WTC11 (cell line): ENCODE measurements at regions of chr12 and their contacts with region 1.

Region 1: DNA sequence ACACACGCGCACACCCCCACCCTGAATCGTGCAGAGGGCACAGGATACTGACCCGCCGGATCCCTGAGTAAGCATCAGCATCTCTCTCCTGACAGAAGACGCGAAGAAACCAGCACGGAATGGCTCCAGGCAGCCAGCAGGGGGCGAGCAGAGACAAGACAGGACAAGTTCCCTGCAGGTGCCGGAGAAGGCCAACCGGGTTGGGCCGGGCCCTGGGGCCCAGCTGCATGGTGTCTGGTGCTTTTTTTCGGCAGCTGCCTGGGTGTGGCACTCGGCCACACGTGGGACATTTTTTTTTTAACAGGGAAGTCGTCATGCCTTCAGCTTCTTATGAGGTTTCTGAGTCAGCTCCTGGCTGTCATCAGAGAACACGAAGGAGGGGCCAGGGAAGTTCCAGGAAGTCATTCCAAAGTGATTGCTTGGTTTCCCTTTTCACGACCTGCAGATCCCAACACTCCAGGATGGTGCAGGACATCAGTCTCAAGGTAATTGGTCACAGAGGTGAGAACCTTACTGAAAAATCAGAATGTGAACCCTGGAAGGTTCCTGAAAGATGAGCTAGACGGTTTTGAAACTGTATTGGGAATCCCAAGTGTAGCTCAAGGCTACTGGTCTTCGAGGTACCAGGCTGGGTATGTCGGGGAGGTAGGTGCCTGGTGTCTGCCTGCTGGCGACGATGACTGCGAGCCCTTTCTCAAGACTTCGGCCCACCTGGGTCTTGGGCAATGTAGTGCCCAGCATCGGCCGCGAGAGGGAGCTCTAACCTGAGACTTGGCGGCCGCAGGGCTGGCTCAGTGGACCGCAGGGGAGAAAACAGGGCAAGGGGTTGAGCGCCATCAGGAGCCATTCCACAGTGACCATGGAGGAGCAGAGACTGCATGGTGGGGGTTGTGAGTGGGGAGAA is 190.8 kb upstream of the PRMT8 start:
- DNase-seq: peak; percentile 94
- ATAC-seq: peak; percentile 71
- H3K4me3 Mint-ChIP-seq: peak overlapping the region; percentile 50
- H3K27ac Mint-ChIP-seq: no peak overlapping the region; the same call in 1 of the 2 replicates
- H3K4me1 Mint-ChIP-seq: peaks cover 12% of the 10 kb centered on the region
- H3K27me3 Mint-ChIP-seq: no peaks in the 10 kb centered on the region; the same call in 1 of the 2 replicates
- CTCF ChIP-seq: peak; percentile 95

Region 2: DNA sequence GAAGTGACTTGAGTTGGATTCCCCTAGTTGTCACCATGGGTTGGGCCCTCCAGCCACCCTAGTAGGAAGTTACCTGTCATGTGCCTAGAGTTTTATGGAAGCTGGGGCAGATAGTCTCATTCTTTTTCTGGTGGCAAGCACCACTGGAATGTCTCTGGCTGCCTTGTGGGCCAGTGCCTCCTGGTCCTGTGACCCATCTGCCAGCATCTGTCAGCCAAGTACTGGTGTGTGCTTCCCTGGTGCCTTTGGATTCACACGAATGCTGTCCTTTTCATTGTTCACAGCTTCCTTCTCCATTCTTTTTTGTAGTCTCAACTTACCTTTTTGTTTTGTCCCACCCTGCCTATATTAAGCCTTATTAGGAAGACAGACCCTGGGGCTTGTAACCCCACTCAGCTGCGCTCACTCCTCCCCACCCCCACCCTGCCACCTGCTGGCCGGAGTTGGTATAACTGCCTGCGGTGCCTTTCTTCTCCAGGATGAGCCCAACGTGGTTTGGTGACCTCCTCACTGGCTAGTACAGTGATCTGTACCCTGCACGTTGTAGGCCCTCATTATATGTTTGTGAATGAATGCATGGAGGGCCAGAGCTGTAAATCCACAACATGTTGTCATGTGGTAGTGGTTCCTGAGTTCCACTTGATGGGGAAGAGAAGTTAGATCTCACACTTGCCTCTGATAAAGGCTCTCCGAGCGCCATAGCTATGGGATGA is 97.3 kb before region 1 on chr12:
- CTCF ChIA-PET with region 1: interaction called, 27 read pairs
- POLR2A ChIA-PET with region 1: no interaction called
- DNase-seq: peak; percentile 83
- ATAC-seq: peak; percentile 6; the same call in 1 of the 2 replicates
- H3K4me3 Mint-ChIP-seq: no peak overlapping the region
- H3K27ac Mint-ChIP-seq: no peak overlapping the region
- H3K4me1 Mint-ChIP-seq: peaks cover 40% of the 10 kb centered on the region
- H3K27me3 Mint-ChIP-seq: peaks cover 36% of the 10 kb centered on the region
- CTCF ChIP-seq: peak; percentile 92

Region 3: DNA sequence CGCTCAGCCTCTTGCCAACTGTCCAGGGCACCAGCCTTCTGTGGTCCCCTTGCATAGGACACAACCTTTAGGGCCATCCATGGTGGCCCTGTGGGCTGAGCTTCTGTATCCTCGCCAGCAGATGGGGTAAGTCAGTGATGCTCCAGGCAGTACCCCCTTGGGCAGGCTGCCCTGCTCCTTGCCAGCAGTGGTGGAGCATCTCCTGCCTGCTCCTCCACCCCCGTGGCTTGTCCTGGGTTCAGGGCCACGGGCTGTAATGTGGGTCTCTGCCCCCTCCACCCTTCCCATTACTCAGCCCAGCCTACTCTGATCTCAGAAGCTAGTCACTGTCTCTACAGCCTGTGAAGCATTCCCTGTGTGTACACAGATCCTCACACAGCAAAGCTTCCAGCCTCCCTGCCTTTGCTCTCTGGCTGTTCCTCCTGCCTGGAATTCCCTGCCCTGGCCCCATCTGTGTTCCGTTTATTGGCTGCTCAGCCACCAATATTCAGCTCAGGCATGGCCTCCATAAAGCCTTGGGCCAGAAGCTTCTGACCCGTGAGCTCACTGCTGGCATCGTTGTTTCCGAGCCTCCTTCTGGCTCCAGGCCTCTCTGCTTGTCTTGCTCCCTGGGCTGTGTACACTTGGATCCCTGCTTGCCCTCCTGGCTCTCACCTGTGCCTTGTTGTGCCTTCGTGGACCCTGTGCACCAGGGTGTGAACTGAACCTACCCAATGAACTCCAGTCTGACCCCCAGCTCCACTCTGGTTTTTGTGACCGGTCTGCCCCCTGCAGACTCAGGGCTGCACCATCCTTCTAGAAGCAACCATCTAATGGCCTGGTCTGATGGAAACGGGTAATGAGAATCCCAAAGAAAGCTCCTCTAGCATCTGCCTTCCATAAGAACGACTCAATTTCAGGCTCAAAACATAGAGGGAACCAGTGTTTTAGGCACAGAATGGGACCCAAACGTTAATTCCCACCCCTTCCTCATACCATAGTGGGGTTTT is 13.8 kb after region 1 on chr12:
- CTCF ChIA-PET with region 1: interaction called, 114 read pairs
- POLR2A ChIA-PET with region 1: no interaction called
- DNase-seq: peak; percentile 62
- ATAC-seq: peak; percentile 90
- H3K4me3 Mint-ChIP-seq: no peak overlapping the region
- H3K27ac Mint-ChIP-seq: no peak overlapping the region
- H3K4me1 Mint-ChIP-seq: peaks cover 8% of the 10 kb centered on the region
- H3K27me3 Mint-ChIP-seq: no peaks in the 10 kb centered on the region
- CTCF ChIP-seq: peak; percentile 22; the same call in 1 of the 2 replicates

Region 4: GRCh38 chr12:3381059-3382047 is 81.2 kb after region 1 on chr12:
- CTCF ChIA-PET with region 1: no interaction called
- POLR2A ChIA-PET with region 1: no interaction called
- DNase-seq: no peak
- ATAC-seq: no peak
- H3K4me3 Mint-ChIP-seq: no peak overlapping the region
- H3K27ac Mint-ChIP-seq: no peak overlapping the region
- H3K4me1 Mint-ChIP-seq: peaks cover 10% of the 10 kb centered on the region
- H3K27me3 Mint-ChIP-seq: no peaks in the 10 kb centered on the region
- CTCF ChIP-seq: no peak

Region 5: DNA sequence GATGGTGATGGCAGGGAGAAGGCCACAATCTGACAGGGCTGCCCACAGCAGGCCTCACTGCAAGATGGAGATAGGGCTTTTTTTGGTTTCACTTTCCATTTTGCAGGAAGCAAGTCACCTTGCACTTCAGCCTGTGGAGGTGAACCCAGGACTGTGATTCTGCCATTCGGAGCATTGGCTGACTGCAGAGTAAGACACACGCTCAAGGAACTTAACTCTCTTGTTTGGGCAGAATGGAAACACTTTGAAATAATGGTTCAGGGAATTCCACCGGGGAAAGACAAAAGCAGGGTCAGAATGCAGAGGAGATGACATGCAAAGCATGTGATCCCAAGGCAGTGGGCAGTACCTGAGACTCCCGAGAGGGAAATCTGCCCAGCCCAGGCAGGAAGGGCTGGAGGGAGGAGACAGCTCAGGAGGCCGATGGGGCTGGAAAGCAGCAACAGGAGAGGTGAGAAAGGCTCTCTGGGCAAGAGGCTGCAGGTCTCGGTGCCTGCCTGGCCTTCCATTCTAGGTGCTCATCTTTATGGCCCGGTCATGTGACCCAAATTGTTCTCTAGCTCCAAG is 132.1 kb after region 1 on chr12:
- CTCF ChIA-PET with region 1: interaction called, 10 read pairs
- POLR2A ChIA-PET with region 1: no interaction called
- DNase-seq: peak; percentile 44
- ATAC-seq: peak; percentile 93
- H3K4me3 Mint-ChIP-seq: no peak overlapping the region; the same call in 1 of the 2 replicates
- H3K27ac Mint-ChIP-seq: peak overlapping the region; percentile 62
- H3K4me1 Mint-ChIP-seq: peaks cover 46% of the 10 kb centered on the region
- H3K27me3 Mint-ChIP-seq: peaks cover 9% of the 10 kb centered on the region
- CTCF ChIP-seq: no peak

Region 6: DNA sequence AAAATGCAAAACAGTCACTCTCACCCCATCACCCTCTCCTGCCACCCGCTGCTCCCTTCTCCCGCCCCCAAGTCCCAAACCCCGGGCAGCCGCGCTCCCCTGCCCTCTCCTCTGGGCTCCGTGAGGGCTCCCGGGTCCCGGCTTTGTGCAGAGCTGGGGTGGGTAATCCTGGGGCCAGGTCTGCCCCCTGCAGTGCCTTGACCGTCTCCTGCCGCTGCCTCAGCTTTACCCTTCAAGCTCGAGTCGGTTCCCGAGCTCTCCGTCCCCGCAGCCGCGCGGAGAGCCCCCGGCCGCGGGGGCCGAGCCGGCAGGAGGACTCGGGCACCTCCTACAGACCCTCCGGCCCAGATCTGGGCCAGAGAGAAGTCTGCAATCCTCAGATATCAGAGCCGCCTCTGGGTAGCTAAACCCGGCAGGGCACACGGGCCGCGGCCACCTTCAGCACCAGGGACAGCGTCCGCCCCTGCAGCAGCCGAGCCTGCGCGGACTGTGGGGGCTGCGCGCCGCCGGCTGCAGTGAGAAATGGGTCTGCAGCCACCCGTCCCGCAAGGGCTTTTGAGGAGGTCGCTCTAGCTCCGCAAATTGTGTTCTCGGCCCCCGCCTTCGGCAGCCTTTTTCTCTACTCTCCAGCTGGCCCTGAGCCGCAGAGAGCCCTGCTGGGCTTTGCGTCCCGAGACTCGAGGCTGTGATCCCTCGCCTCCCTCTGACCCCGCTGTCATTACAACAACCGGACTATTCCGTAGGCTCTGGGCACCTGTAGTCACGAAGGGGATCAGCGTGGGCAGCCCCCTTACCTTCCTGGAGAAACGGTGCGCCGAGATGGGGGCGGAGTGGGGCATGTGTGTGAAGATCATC is 192.0 kb after region 1 on chr12:
- CTCF ChIA-PET with region 1: interaction called, 20 read pairs
- POLR2A ChIA-PET with region 1: no interaction called
- DNase-seq: peak; percentile 84
- ATAC-seq: peak; percentile 77
- H3K4me3 Mint-ChIP-seq: peak overlapping the region; percentile 68
- H3K27ac Mint-ChIP-seq: no peak overlapping the region
- H3K4me1 Mint-ChIP-seq: peaks cover 49% of the 10 kb centered on the region
- H3K27me3 Mint-ChIP-seq: peaks cover 88% of the 10 kb centered on the region
- CTCF ChIP-seq: no peak

Region 7: GRCh38 chr12:3673981-3674708 is 374.0 kb after region 1 on chr12:
- CTCF ChIA-PET with region 1: interaction called, 16 read pairs
- POLR2A ChIA-PET with region 1: no interaction called
- DNase-seq: no peak
- ATAC-seq: no peak
- H3K4me3 Mint-ChIP-seq: no peak overlapping the region
- H3K27ac Mint-ChIP-seq: no peak overlapping the region
- H3K4me1 Mint-ChIP-seq: no peaks in the 10 kb centered on the region; the same call in 1 of the 2 replicates
- H3K27me3 Mint-ChIP-seq: no peaks in the 10 kb centered on the region
- CTCF ChIP-seq: no peak